Esophagus muscularis mucosa (tissue), 4 donors: ENCODE measurements at regions of chr3 and their contacts with region 1.

Region 1: GRCh38 chr3:54374214-54374855 is 252.0 kb downstream of the CACNA2D3 start:
- DNase-seq: no peak
- H3K4me3 ChIP-seq: no peak overlapping the region
- H3K27ac ChIP-seq: no peak overlapping the region
- H3K4me1 ChIP-seq: no peaks in the 10 kb centered on the region
- H3K27me3 ChIP-seq: no peaks in the 10 kb centered on the region
- CTCF ChIP-seq: peak; percentile 45 to 53 (median 47)
- EP300 ChIP-seq: no peak
- POLR2A ChIP-seq: no peak

Region 2: DNA sequence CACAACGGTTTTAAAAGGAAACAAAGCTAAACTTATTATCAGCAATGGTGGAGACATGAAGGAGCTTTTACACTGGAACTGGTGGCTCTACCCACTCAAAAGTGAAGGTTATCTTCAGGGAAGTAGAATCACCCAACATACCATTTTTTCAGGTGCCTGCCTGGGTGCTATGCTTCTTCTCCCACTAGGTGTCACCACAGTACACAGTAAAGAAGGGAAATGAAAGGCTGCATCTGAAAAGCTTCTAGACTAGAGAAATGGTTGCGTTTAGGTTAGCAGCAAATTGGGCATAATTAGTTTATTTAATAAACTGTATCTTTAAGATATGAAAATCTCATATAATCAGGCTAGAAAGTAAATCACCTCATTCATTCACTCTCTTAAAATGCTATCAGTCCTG is 435.7 kb before region 1 on chr3:
- intact Hi-C with region 1: loop called (anchors 5 kb)
- DNase-seq: no peak
- H3K4me3 ChIP-seq: no peak overlapping the region
- H3K27ac ChIP-seq: no peak overlapping the region
- H3K4me1 ChIP-seq: no peaks in the 10 kb centered on the region
- H3K27me3 ChIP-seq: peaks cover 0 to 10% (median 0%) of the 10 kb centered on the region in 4 donors
- CTCF ChIP-seq: peak; percentile 70 to 81 (median 76)
- EP300 ChIP-seq: no peak
- POLR2A ChIP-seq: no peak

Region 3: DNA sequence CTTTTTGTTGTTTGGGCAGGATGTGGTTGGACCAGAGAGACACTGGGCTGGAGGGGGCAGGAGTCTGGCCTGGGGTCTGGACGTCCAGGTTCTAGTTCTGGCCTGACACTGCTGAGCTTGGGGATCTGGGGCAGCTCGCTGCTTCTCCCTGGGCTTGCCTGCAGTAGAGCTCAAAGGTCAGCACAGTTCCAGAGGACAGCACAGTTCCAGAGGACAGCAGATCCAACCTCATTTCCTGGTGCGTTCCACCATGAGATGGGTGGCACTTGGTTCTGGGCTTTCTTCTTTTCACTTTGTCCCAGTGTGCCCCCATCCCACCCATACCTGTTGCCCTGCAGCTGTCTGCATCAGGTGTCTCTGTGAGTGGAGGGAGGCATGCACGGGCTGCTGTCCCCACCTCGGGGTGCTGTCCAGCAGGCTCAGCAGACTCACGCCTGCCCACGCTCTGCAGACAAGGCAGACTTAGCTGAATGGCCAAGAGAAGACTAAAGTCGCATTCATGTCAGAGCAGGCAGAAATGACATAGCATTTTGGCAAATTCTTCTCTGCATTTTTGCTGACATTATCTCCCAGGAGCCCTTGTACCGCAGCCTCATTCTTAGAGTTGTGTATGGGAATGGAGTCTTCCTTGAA is 235.3 kb before region 1 on chr3:
- intact Hi-C with region 1: loop called (anchors 10 kb)
- DNase-seq: no peak
- H3K4me3 ChIP-seq: no peak overlapping the region
- H3K27ac ChIP-seq: no peak overlapping the region
- H3K4me1 ChIP-seq: peaks cover 0 to 5% (median 2%) of the 10 kb centered on the region in 4 donors
- H3K27me3 ChIP-seq: no peaks in the 10 kb centered on the region
- CTCF ChIP-seq: no peak
- EP300 ChIP-seq: no peak
- POLR2A ChIP-seq: no peak

Region 4: DNA sequence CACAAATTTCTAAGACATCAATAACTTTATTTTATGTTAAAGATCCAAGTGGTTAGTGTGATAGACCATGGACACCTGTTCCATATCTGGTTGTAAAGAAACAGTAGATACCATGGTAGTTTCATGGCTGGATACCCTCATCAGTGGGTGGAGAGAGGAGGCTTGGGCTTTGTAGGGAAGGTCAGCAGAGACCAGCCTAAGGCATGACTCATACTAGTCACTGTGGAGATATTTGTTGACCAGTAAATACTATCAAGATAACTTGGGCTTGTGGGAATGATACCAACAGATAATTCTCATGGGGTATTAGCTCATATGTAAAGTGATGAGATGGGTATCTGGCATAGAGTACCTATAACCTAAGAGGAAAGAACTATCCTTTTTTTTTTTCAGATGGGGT is 102.5 kb after region 1 on chr3:
- intact Hi-C with region 1: no loop called
- DNase-seq: no peak
- H3K4me3 ChIP-seq: no peak overlapping the region
- H3K27ac ChIP-seq: no peak overlapping the region
- H3K4me1 ChIP-seq: no peaks in the 10 kb centered on the region
- H3K27me3 ChIP-seq: no peaks in the 10 kb centered on the region
- CTCF ChIP-seq: no peak
- EP300 ChIP-seq: no peak
- POLR2A ChIP-seq: no peak

Region 5: GRCh38 chr3:54773271-54773670 is 398.9 kb after region 1 on chr3:
- intact Hi-C with region 1: no loop called
- DNase-seq: peak; percentile 31
- H3K4me3 ChIP-seq: no peak overlapping the region
- H3K27ac ChIP-seq: no peak overlapping the region
- H3K4me1 ChIP-seq: no peaks in the 10 kb centered on the region
- H3K27me3 ChIP-seq: no peaks in the 10 kb centered on the region
- CTCF ChIP-seq: no peak
- EP300 ChIP-seq: no peak
- POLR2A ChIP-seq: no peak